Activated B cell treated with CpG ODN at 0.5 μM for 24 hours (primary cell): ENCODE measurements at regions of chr2 and their contacts with region 1.

Region 1: GRCh38 chr2:17646081-17646554 is 105.6 kb downstream of the VSNL1 start:
- DNase-seq: no peak
- ATAC-seq: peak; percentile 86
- H3K4me3 Mint-ChIP-seq: peak overlapping the region; percentile 24
- H3K27ac Mint-ChIP-seq: peak overlapping the region; percentile 31
- H3K4me1 Mint-ChIP-seq: peaks cover 18% of the 10 kb centered on the region
- H3K27me3 Mint-ChIP-seq: no peaks in the 10 kb centered on the region
- CTCF ChIP-seq: peak; percentile 89

Region 2: GRCh38 chr2:17518212-17519154 is 127.6 kb before region 1 on chr2 and contains the start of gene RAD51AP2:
- CTCF ChIA-PET with region 1: no interaction called
- POLR2A ChIA-PET with region 1: no interaction called
- intact Hi-C with region 1: loop called (anchors 5 kb)
- DNase-seq: peak; percentile 54
- ATAC-seq: peak; percentile 70
- H3K4me3 Mint-ChIP-seq: peak within 1 kb of the TSS; percentile 69
- H3K27ac Mint-ChIP-seq: peak within 1 kb of the TSS; percentile 80
- H3K4me1 Mint-ChIP-seq: peaks cover 26% of the 10 kb centered on the region
- H3K27me3 Mint-ChIP-seq: peaks cover 28% of the 10 kb centered on the region
- CTCF ChIP-seq: no peak
- total RNA-seq, gene RAD51AP2: not detected in 2 replicates

Region 3: GRCh38 chr2:17658251-17658843 is 12.2 kb after region 1 on chr2:
- CTCF ChIA-PET with region 1: interaction called, 6 read pairs
- POLR2A ChIA-PET with region 1: interaction called, 5 read pairs
- intact Hi-C with region 1: loop called (anchors 1 kb)
- DNase-seq: no peak
- ATAC-seq: peak; percentile 50
- H3K4me3 Mint-ChIP-seq: no peak overlapping the region
- H3K27ac Mint-ChIP-seq: peak overlapping the region; percentile 16
- H3K4me1 Mint-ChIP-seq: peaks cover 5% of the 10 kb centered on the region
- H3K27me3 Mint-ChIP-seq: no peaks in the 10 kb centered on the region
- CTCF ChIP-seq: no peak

Region 4: DNA sequence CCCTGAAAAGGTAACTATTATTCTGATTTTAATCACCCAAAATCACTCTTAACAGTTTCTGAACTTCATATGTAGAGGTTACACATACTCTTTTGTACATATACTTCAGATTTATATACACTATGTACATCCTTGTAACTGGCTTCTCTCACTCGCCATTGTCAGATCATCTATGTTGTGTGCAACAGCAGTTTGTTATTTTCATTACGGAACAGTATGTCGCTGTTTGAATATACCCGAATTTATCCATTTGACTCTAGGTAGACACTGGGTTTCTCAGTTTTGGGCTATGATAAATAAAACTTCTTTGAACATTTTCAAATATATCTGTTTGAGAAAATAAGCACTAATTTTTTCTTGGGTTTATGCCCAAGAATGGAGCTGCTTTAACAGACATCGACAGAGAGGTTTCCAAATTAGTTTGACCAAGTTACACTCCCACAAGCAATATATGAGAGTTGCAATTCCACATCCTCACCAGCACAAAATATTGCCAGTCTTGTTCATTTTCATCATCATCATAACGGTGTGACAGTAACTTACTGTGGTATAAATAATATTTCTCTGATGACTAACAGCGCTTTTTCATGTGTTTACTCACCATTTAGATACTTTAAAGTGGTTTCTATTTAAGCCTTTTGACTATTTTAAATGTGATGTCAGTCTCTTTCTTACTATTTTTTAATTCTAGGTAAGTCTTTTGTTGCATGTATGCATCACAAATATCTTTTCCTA is 26.6 kb after region 1 on chr2:
- CTCF ChIA-PET with region 1: interaction called, 35 read pairs
- POLR2A ChIA-PET with region 1: no interaction called
- intact Hi-C with region 1: loop called (anchors 1 kb)
- DNase-seq: no peak
- ATAC-seq: no peak
- H3K4me3 Mint-ChIP-seq: no peak overlapping the region
- H3K27ac Mint-ChIP-seq: no peak overlapping the region
- H3K4me1 Mint-ChIP-seq: no peaks in the 10 kb centered on the region
- H3K27me3 Mint-ChIP-seq: no peaks in the 10 kb centered on the region
- CTCF ChIP-seq: no peak

Region 5: GRCh38 chr2:18178736-18179349 is 532.7 kb after region 1 on chr2:
- CTCF ChIA-PET with region 1: interaction called, 4 read pairs
- POLR2A ChIA-PET with region 1: no interaction called
- intact Hi-C with region 1: loop called (anchors 1 kb)
- DNase-seq: no peak
- ATAC-seq: peak; percentile 40
- H3K4me3 Mint-ChIP-seq: no peak overlapping the region
- H3K27ac Mint-ChIP-seq: no peak overlapping the region
- H3K4me1 Mint-ChIP-seq: no peaks in the 10 kb centered on the region
- H3K27me3 Mint-ChIP-seq: peaks cover 5% of the 10 kb centered on the region
- CTCF ChIP-seq: peak; percentile 23

Region 6: GRCh38 chr2:18378020-18378653 is 732.0 kb after region 1 on chr2:
- CTCF ChIA-PET with region 1: no interaction called
- POLR2A ChIA-PET with region 1: no interaction called
- intact Hi-C with region 1: loop called (anchors 5 kb)
- DNase-seq: no peak
- ATAC-seq: no peak
- H3K4me3 Mint-ChIP-seq: no peak overlapping the region
- H3K27ac Mint-ChIP-seq: no peak overlapping the region
- H3K4me1 Mint-ChIP-seq: no peaks in the 10 kb centered on the region
- H3K27me3 Mint-ChIP-seq: peaks cover 11% of the 10 kb centered on the region
- CTCF ChIP-seq: no peak